Naive thymus-derived CD4-positive, alpha-beta T cell (primary cell): ENCODE measurements at regions of chr11 and their contacts with region 1.

Region 1: GRCh38 chr11:120172054-120172911 is 34.4 kb upstream of the TRIM29 start:
- DNase-seq: peak in 8 of 9 donors; percentile 23 to 50 (median 42)
- ATAC-seq: peak; percentile 68
- H3K4me3 ChIP-seq: no peak overlapping the region
- H3K4me3 Mint-ChIP-seq: peak overlapping the region in 2 of 10 donors; percentile 12 to 34
- H3K27ac ChIP-seq: no peak overlapping the region
- H3K27ac Mint-ChIP-seq: no peak overlapping the region
- H3K4me1 ChIP-seq: no peaks in the 10 kb centered on the region
- H3K4me1 Mint-ChIP-seq: peaks cover 0 to 11% (median 8%) of the 10 kb centered on the region in 7 donors
- H3K27me3 ChIP-seq: peaks cover 0 to 6% of the 10 kb centered on the region in 2 donors
- H3K27me3 Mint-ChIP-seq: peaks cover 51 to 59% (median 53%) of the 10 kb centered on the region in 5 donors

Region 2: GRCh38 chr11:119641983-119642745 is 530.1 kb before region 1 on chr11:
- CTCF ChIA-PET with region 1: no interaction called
- POLR2A ChIA-PET with region 1: no interaction called
- intact Hi-C with region 1: loop called in 1 of 2 experiments (anchors 1 kb)
- DNase-seq: peak in 2 of 9 donors; percentile 8 to 22
- ATAC-seq: no peak
- H3K4me3 ChIP-seq: no peak overlapping the region
- H3K4me3 Mint-ChIP-seq: no peak overlapping the region
- H3K27ac ChIP-seq: no peak overlapping the region
- H3K27ac Mint-ChIP-seq: no peak overlapping the region
- H3K4me1 ChIP-seq: no peaks in the 10 kb centered on the region
- H3K4me1 Mint-ChIP-seq: no peaks in the 10 kb centered on the region
- H3K27me3 ChIP-seq: no peaks in the 10 kb centered on the region
- H3K27me3 Mint-ChIP-seq: peaks cover 0 to 10% (median 2%) of the 10 kb centered on the region in 5 donors

Region 3: GRCh38 chr11:119666463-119667131 is 505.7 kb before region 1 on chr11:
- CTCF ChIA-PET with region 1: no interaction called
- POLR2A ChIA-PET with region 1: no interaction called
- intact Hi-C with region 1: loop called in 1 of 2 experiments (anchors 2 kb)
- DNase-seq: peak in 8 of 9 donors; percentile 11 to 62 (median 44)
- ATAC-seq: peak; percentile 87
- H3K4me3 ChIP-seq: no peak overlapping the region
- H3K4me3 Mint-ChIP-seq: no peak overlapping the region
- H3K27ac ChIP-seq: no peak overlapping the region
- H3K27ac Mint-ChIP-seq: no peak overlapping the region
- H3K4me1 ChIP-seq: no peaks in the 10 kb centered on the region
- H3K4me1 Mint-ChIP-seq: peaks cover 0 to 5% (median 0%) of the 10 kb centered on the region in 7 donors
- H3K27me3 ChIP-seq: no peaks in the 10 kb centered on the region
- H3K27me3 Mint-ChIP-seq: no peaks in the 10 kb centered on the region

Region 4: DNA sequence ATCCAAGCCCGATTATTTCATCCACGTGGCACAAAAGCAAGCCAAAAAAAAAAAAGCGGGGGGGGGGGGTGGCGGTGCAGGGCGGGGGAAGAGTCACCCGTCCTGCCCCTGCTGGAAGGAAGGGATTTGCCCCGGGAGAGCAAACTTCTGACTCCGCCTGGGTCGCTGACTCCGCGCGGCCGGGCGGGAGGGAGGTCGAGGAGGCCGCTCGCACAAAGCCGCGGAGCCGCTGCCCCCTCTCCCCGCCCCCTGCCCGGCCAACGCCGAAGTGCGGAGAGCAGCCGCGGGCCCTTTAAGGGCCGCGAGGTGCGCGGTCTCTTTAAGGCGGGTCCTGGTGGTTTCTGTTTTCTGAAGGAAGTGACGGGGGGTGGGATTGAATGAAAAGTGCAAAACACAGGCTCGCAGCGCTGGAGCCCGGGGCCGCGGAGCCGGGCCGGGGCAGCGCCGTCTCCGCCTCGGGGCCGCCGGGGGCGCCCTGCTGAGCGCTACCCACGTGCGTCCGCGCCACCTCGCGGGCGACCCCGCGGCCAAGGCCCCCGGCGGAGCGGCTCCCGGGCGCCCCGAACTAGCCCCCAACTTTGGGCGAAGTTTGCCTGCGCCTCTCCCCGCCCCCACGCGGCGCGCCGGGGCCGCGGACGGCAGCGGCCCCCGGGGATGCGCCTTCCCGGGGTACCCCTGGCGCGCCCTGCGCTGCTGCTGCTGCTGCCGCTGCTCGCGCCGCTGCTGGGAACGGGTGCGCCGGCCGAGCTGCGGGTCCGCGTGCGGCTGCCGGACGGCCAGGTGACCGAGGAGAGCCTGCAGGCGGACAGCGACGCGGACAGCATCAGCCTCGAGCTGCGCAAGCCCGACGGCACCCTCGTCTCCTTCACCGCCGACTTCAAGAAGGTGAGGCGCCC is 38.6 kb after region 1 on chr11 and contains the start of gene OAF:
- CTCF ChIA-PET with region 1: no interaction called
- POLR2A ChIA-PET with region 1: no interaction called
- intact Hi-C with region 1: loop called (anchors 1 to 5 kb)
- DNase-seq: peak; percentile 49 to 77 (median 69)
- ATAC-seq: peak; percentile 85
- H3K4me3 ChIP-seq: peak within 1 kb of the TSS; percentile 80
- H3K4me3 Mint-ChIP-seq: peak within 1 kb of the TSS; percentile 93 to 99 (median 96)
- H3K27ac ChIP-seq: peak within 1 kb of the TSS; percentile 46
- H3K27ac Mint-ChIP-seq: peak within 1 kb of the TSS; percentile 83 to 96 (median 86)
- H3K4me1 ChIP-seq: peaks cover 0 to 8% of the 10 kb centered on the region in 2 donors
- H3K4me1 Mint-ChIP-seq: peaks cover 11 to 27% (median 18%) of the 10 kb centered on the region in 7 donors
- H3K27me3 ChIP-seq: no peaks in the 10 kb centered on the region
- H3K27me3 Mint-ChIP-seq: peaks cover 0 to 70% (median 13%) of the 10 kb centered on the region in 5 donors
- total RNA-seq, gene OAF: 3.4 to 21.2 (median 4.6) TPM

Region 5: GRCh38 chr11:120229451-120230424 is 57.5 kb after region 1 on chr11:
- CTCF ChIA-PET with region 1: interaction called, 11 read pairs
- POLR2A ChIA-PET with region 1: no interaction called
- intact Hi-C with region 1: loop called in 1 of 2 experiments (anchors 1 kb)
- DNase-seq: peak in 3 of 9 donors; percentile 9 to 18 (median 17)
- ATAC-seq: peak; percentile 33
- H3K4me3 ChIP-seq: no peak overlapping the region
- H3K4me3 Mint-ChIP-seq: no peak overlapping the region
- H3K27ac ChIP-seq: no peak overlapping the region
- H3K27ac Mint-ChIP-seq: no peak overlapping the region
- H3K4me1 ChIP-seq: no peaks in the 10 kb centered on the region
- H3K4me1 Mint-ChIP-seq: peaks cover 0 to 8% (median 3%) of the 10 kb centered on the region in 7 donors
- H3K27me3 ChIP-seq: peaks cover 0 to 3% of the 10 kb centered on the region in 2 donors
- H3K27me3 Mint-ChIP-seq: peaks cover 3 to 26% (median 11%) of the 10 kb centered on the region in 5 donors

Region 6: GRCh38 chr11:120303004-120303637 is 130.8 kb after region 1 on chr11:
- CTCF ChIA-PET with region 1: no interaction called
- POLR2A ChIA-PET with region 1: no interaction called
- intact Hi-C with region 1: loop called (anchors 1 kb)
- DNase-seq: peak in 8 of 9 donors; percentile 14 to 69 (median 36)
- ATAC-seq: peak; percentile 82
- H3K4me3 ChIP-seq: no peak overlapping the region
- H3K4me3 Mint-ChIP-seq: no peak overlapping the region
- H3K27ac ChIP-seq: no peak overlapping the region
- H3K27ac Mint-ChIP-seq: no peak overlapping the region
- H3K4me1 ChIP-seq: no peaks in the 10 kb centered on the region
- H3K4me1 Mint-ChIP-seq: peaks cover 0 to 1% (median 0%) of the 10 kb centered on the region in 7 donors
- H3K27me3 ChIP-seq: no peaks in the 10 kb centered on the region
- H3K27me3 Mint-ChIP-seq: peaks cover 12 to 38% (median 30%) of the 10 kb centered on the region in 5 donors

Region 7: GRCh38 chr11:121426476-121427399 is 1254.5 kb after region 1 on chr11:
- CTCF ChIA-PET with region 1: no interaction called
- POLR2A ChIA-PET with region 1: no interaction called
- intact Hi-C with region 1: no loop called
- DNase-seq: peak in 6 of 9 donors; percentile 30 to 56 (median 36)
- ATAC-seq: peak; percentile 79
- H3K4me3 ChIP-seq: peak overlapping the region; percentile 44
- H3K4me3 Mint-ChIP-seq: peak overlapping the region; percentile 67 to 86 (median 78)
- H3K27ac ChIP-seq: peak overlapping the region; percentile 37
- H3K27ac Mint-ChIP-seq: peak overlapping the region; percentile 5 to 89 (median 43)
- H3K4me1 ChIP-seq: peaks cover 0 to 27% of the 10 kb centered on the region in 2 donors
- H3K4me1 Mint-ChIP-seq: peaks cover 34 to 70% (median 54%) of the 10 kb centered on the region in 7 donors
- H3K27me3 ChIP-seq: no peaks in the 10 kb centered on the region
- H3K27me3 Mint-ChIP-seq: peaks cover 0 to 3% (median 0%) of the 10 kb centered on the region in 5 donors